ENCODE measurements at regions of chr19 and their contacts with region 1.

Region 1: DNA sequence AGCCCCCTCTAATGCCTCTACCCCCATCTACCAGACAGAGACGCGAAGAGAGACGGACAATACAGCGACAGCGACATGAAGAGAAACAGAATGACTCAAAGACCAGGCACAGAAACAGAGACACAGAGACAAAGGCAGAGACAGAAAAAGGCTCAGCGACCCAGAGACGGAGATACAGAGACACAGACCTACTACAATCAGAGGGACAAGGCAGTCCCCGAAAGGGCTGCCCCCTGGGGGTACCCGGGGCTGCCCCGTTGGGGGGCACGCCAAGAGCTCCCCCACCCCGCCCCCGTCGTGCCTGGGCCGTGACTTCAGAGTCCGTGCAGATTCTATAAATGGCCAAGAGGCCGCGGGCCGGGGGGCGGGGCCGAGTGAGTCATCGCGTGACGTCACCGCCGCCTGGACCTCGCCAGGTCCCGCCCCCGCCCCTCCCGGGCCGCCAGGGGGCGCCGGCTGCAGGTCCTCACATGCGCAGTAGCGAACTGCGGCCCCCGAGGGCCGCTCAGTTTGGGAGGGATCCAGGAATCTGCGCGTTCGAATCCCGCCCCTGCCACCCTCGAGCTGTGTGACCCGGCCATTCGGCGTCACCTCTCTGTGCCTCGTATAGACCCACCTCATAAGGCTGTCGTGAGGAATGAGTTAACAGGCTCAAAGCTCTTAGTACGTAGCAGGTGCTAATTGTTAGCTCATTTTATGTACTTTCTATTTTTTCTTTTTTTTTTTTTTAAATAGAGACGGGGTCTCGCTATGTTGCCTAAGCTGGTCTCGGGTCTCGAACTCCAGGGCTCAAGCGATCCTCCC is 2.7 kb upstream of the CNN1 start:
- DNase-seq: peak; percentile 94
- ATAC-seq: peak; percentile 76
- H3K4me3 Mint-ChIP-seq: peak overlapping the region; percentile 2
- H3K27ac Mint-ChIP-seq: peak overlapping the region; percentile 51
- H3K4me1 Mint-ChIP-seq: peaks cover 17% of the 10 kb centered on the region
- H3K27me3 Mint-ChIP-seq: peaks cover 14% of the 10 kb centered on the region

Region 2: GRCh38 chr19:11581740-11582139 is 45.7 kb after region 1 on chr19:
- CTCF ChIA-PET with region 1: interaction called, 4 read pairs
- POLR2A ChIA-PET with region 1: no interaction called
- intact Hi-C with region 1: loop called (anchors 1 to 5 kb)
- DNase-seq: peak; percentile 74
- ATAC-seq: peak; percentile 85
- H3K4me3 Mint-ChIP-seq: peak overlapping the region; percentile 61
- H3K27ac Mint-ChIP-seq: peak overlapping the region; percentile 97
- H3K4me1 Mint-ChIP-seq: peaks cover 25% of the 10 kb centered on the region
- H3K27me3 Mint-ChIP-seq: no peaks in the 10 kb centered on the region

Measured in activated CD4-positive, alpha-beta T cell treated with anti-CD3 and anti-CD28 coated beads for 36 hours (primary cell).